GM12878 (cell line): ENCODE measurements at regions of chr9 and their contacts with region 1.

Region 1: GRCh38 chr9:132800038-132800648 is 77.9 kb downstream of the AK8 start:
- DNase-seq: no peak
- ATAC-seq: peak; percentile 92
- H3K4me3 ChIP-seq: no peak overlapping the region
- H3K27ac ChIP-seq: no peak overlapping the region
- H3K4me1 ChIP-seq: peaks cover 4% of the 10 kb centered on the region; the same call in 1 of the 2 replicates
- H3K27me3 ChIP-seq: no peaks in the 10 kb centered on the region; a peak in 2 of 4 replicates
- CTCF ChIP-seq: peak; percentile 83 to 90 (median 84)
- EP300 ChIP-seq: no peak
- POLR2A ChIP-seq: no peak
- RAD21 ChIP-seq: peak; percentile 93

Region 2: DNA sequence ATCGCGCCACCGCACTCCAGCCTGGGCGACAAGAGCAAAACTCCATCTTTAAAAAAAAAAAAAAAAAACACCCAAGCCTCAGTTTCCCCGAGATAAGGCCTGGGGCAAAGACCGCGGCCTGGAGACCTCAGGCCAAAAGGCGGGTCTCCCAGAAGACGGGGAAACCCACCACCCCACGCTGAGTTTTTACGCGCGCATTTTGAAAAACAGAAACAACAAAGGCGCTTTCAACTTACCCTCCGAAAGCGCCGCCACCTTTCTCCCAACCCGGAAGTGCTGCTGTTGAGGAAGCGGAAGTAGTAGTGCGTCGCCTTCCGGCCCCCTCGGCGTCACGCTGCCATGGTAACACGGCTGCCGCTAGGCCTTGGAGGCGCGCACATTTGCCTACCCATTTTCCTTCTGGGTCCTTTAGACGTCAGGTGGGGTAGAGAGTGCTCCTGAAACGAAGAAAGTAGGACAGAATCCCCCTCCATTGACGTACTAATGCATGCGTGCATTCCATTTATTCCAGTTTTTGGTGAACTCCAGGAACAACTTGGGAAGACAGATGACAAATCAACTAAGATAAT is 393.5 kb before region 1 on chr9 and contains the start of gene TTF1:
- CTCF ChIA-PET with region 1: interaction called, 4 read pairs
- POLR2A ChIA-PET with region 1: no interaction called
- RAD21 ChIA-PET with region 1: no interaction called
- SMC1A ChIA-PET with region 1: no interaction called
- in situ Hi-C with region 1: no loop called
- intact Hi-C with region 1: loop called (anchors 2 kb)
- DNase-seq: peak; percentile 77
- ATAC-seq: peak; percentile 83
- H3K4me3 ChIP-seq: peak within 1 kb of the TSS; percentile 68
- H3K27ac ChIP-seq: peak within 1 kb of the TSS; percentile 74
- H3K4me1 ChIP-seq: peaks cover 17% of the 10 kb centered on the region
- H3K27me3 ChIP-seq: peaks cover 0 to 8% of the 10 kb centered on the region in 2 experiments; a peak in 1 of 4 replicates
- CTCF ChIP-seq: no peak
- EP300 ChIP-seq: no peak
- POLR2A ChIP-seq: peak; percentile 68
- RAD21 ChIP-seq: no peak
- polyA plus RNA-seq, gene TTF1: 11.3 to 16.0 TPM

Region 3: GRCh38 chr9:132424857-132425686 is 375.1 kb before region 1 on chr9:
- CTCF ChIA-PET with region 1: no interaction called
- POLR2A ChIA-PET with region 1: no interaction called
- RAD21 ChIA-PET with region 1: no interaction called
- SMC1A ChIA-PET with region 1: no interaction called
- in situ Hi-C with region 1: loop called (anchors 5 kb)
- intact Hi-C with region 1: no loop called
- DNase-seq: no peak
- ATAC-seq: no peak
- H3K4me3 ChIP-seq: no peak overlapping the region
- H3K27ac ChIP-seq: no peak overlapping the region
- H3K4me1 ChIP-seq: no peaks in the 10 kb centered on the region
- H3K27me3 ChIP-seq: peaks cover 3 to 4% of the 10 kb centered on the region in 2 experiments; a peak in 3 of 4 replicates
- CTCF ChIP-seq: no peak
- EP300 ChIP-seq: no peak
- POLR2A ChIP-seq: no peak
- RAD21 ChIP-seq: no peak

Region 4: DNA sequence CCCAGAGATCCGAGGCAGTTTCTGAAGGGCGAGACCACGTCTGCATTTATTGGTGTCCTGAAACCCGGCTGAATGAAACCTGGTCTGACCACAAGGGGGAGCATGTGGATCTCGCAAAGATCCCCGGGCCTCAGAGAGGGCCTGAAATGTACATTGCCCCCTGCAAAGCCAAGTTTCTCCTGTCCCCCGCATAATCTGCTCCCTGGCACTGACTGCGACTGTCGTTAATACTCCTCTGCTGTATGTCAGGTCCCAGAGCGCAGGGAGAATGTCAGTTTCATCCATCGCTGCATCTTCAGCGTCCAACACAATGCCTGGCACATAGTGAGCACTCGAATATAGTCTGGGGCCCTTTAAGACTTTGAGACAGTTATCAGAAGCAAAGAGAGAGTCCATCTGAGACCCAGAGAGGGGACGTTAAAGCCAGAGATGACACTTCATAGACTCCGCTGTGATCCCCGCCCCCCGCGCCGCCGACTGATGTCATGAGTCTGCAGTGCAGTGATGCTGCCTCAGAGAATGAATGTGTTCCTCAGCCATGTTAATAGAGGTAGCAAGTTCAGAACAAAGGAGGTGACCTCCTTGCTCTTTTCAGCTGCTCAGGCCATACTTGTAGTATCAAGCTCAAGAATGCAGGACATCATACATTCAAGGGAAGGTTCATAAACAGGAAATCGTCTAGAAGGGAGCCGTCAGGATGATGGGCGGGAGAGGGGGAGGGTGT is 292.2 kb before region 1 on chr9:
- CTCF ChIA-PET with region 1: interaction called, 3 read pairs
- POLR2A ChIA-PET with region 1: no interaction called
- RAD21 ChIA-PET with region 1: no interaction called
- SMC1A ChIA-PET with region 1: no interaction called
- in situ Hi-C with region 1: loop called (anchors 5 kb)
- intact Hi-C with region 1: loop called (anchors 1 kb)
- DNase-seq: no peak
- ATAC-seq: peak; percentile 92
- H3K4me3 ChIP-seq: no peak overlapping the region
- H3K27ac ChIP-seq: no peak overlapping the region
- H3K4me1 ChIP-seq: no peaks in the 10 kb centered on the region
- H3K27me3 ChIP-seq: peaks cover 0 to 3% of the 10 kb centered on the region in 2 experiments; a peak in 2 of 4 replicates
- CTCF ChIP-seq: peak; percentile 74 to 83 (median 77)
- EP300 ChIP-seq: no peak
- POLR2A ChIP-seq: no peak
- RAD21 ChIP-seq: peak; percentile 76

Region 5: DNA sequence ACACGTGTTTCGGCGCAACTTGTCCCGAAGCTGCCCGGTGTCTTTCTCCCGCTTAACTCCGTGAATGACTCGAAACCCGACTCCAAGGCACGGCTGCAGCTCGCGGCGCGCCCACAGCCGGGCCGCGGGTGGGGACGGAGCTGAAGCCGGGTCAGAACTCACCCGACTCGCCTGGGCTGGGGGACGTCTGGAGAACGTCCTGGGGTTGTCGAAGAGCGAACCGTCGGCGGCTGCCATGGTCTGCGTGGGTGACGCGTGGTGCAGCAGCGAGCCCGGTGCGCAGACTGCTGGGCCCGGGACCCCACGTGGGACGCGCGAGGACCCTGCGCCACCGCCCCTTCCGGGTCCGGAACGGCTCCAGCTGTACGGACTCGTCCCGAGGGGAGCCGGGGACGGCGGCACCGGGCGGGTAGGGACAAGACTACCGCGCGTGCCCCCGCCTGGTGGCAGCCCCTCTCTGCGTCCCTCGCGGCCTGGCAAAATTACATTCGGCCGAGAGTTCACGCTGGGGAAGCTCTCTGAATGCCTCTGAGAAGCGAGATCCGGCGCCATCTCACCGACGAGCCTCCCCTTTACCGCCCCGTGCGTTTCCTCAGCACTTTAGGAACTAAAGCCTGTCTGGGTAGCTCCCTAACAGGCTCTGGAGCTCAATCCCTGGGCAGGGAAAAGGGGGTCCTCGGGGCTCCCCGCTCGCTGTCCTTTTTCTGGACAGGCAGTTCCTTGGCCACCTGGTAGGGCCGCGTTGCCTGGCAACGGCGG is 130.3 kb before region 1 on chr9 and contains the start of gene DDX31:
- CTCF ChIA-PET with region 1: no interaction called
- POLR2A ChIA-PET with region 1: no interaction called
- RAD21 ChIA-PET with region 1: no interaction called
- SMC1A ChIA-PET with region 1: no interaction called
- in situ Hi-C with region 1: no loop called
- intact Hi-C with region 1: loop called (anchors 5 kb)
- DNase-seq: peak; percentile 37
- ATAC-seq: peak; percentile 93
- H3K4me3 ChIP-seq: peak within 1 kb of the TSS; percentile 93
- H3K27ac ChIP-seq: peak within 1 kb of the TSS; percentile 98
- H3K4me1 ChIP-seq: no peaks in the 10 kb centered on the region; the same call in 1 of the 2 replicates
- H3K27me3 ChIP-seq: no peaks in the 10 kb centered on the region
- CTCF ChIP-seq: no peak
- EP300 ChIP-seq: no peak
- POLR2A ChIP-seq: peak; percentile 96
- RAD21 ChIP-seq: no peak
- polyA plus RNA-seq, gene DDX31: 12.1 to 14.6 TPM

Region 6: DNA sequence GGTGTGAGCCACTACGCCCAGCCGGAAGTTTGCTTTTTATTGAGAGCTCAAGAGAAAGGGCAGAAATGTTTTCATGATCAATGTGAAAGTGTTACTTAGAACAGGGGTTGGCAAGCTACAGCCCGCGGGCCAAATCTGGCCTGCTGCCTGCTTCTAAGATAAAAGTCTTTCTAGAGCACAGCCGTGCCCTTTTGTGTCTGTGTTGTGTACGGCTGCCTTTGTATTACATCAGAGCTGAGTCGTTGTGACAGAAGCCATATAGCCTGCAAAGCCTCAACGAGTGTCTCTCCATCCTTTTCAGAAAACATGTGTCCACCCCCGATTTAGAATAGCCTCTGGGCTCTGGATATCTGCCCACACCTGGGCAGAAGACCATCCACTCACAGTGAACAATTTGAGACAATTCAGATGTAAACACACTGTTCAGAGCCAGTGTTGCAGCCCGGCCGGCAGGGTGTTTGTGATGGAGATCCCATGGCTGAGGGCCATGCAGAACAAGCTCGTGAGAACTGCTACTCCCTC is 49.1 kb after region 1 on chr9:
- CTCF ChIA-PET with region 1: no interaction called
- POLR2A ChIA-PET with region 1: no interaction called
- RAD21 ChIA-PET with region 1: no interaction called
- SMC1A ChIA-PET with region 1: no interaction called
- in situ Hi-C with region 1: no loop called
- intact Hi-C with region 1: no loop called
- DNase-seq: no peak
- ATAC-seq: no peak
- H3K4me3 ChIP-seq: no peak overlapping the region
- H3K27ac ChIP-seq: no peak overlapping the region
- H3K4me1 ChIP-seq: no peaks in the 10 kb centered on the region
- H3K27me3 ChIP-seq: no peaks in the 10 kb centered on the region; a peak in 1 of 4 replicates
- CTCF ChIP-seq: no peak
- EP300 ChIP-seq: no peak
- POLR2A ChIP-seq: no peak
- RAD21 ChIP-seq: no peak

Region 7: DNA sequence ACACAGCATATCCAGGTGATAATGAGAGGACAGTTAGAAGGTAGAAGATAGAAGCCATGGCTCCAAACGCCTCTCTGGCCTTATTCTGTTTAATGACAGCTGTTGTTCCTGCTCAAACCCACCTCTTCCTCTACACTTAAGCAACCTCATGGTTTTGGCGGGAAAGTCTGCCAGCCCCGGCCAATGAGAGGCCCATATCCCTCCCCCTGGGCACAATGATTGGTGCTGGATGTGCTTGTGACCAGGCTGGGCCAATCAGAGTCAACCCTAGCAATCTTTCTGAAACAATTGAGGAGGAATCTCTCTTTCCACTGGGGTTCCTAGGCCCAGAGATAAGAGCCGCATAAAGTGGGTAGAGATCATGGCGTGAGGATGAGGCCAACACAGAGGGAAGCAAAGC is 173.6 kb after region 1 on chr9:
- CTCF ChIA-PET with region 1: no interaction called
- POLR2A ChIA-PET with region 1: no interaction called
- RAD21 ChIA-PET with region 1: no interaction called
- SMC1A ChIA-PET with region 1: no interaction called
- in situ Hi-C with region 1: no loop called
- intact Hi-C with region 1: loop called (anchors 10 kb)
- DNase-seq: no peak
- ATAC-seq: peak; percentile 24; the same call in 1 of the 3 replicates
- H3K4me3 ChIP-seq: no peak overlapping the region
- H3K27ac ChIP-seq: no peak overlapping the region
- H3K4me1 ChIP-seq: no peaks in the 10 kb centered on the region
- H3K27me3 ChIP-seq: peaks cover 2% of the 10 kb centered on the region in 2 experiments; a peak in 1 of 4 replicates
- CTCF ChIP-seq: no peak
- EP300 ChIP-seq: no peak
- POLR2A ChIP-seq: no peak
- RAD21 ChIP-seq: no peak